ENCODE measurements at regions of chr2 and their contacts with region 1.

Region 1: DNA sequence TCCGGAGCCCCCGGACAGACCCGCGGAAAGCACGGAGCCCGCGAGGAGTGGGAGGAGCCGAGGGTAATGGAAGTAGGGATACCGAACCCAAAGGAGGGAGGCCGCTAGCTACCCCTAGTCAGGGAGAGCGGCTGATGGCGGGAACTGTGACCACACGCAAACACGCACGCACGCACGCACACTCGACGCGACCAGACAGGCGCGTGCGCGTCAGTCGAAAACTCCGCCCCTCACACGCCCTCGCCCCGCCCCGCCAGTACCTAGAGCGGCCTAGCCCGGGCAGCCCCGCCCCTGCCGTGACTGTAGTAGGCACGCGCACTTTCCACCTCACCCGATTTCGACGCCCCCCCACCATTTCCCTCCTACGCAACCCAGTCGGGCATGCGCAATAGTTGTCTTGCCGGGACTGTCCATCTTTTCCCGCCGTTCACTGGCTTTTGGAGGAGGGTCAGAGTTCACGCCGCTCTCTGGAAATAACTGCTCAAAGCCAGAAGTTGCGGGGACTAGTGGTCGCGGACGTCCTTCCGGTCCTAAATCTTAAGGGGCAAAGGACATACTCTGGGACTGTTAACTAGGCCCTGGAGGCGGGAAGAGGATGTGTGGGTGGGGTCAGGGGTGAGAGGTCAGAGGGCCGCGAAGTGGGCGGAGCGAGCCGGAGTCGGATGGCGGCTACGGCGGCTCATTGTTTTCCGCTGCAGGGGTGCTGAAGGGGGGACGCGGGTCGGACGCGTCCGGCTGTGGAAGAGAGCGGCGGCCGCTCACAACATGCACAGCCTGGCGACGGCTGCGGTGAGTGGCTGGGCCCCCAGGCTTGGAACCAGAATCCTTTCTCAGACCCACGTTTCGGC is at the starts of genes CNOT9 and USP37:
- DNase-seq: peak; percentile 100
- H3K4me3 Mint-ChIP-seq: peak within 1 kb of the TSS; percentile 96
- H3K27ac Mint-ChIP-seq: peak within 1 kb of the TSS; percentile 100
- H3K4me1 Mint-ChIP-seq: peaks cover 54% of the 10 kb centered on the region
- H3K27me3 Mint-ChIP-seq: no peaks in the 10 kb centered on the region
- total RNA-seq, gene CNOT9: 84.7 to 87.3 TPM
- total RNA-seq, gene USP37: 27.2 to 28.7 TPM

Region 2: DNA sequence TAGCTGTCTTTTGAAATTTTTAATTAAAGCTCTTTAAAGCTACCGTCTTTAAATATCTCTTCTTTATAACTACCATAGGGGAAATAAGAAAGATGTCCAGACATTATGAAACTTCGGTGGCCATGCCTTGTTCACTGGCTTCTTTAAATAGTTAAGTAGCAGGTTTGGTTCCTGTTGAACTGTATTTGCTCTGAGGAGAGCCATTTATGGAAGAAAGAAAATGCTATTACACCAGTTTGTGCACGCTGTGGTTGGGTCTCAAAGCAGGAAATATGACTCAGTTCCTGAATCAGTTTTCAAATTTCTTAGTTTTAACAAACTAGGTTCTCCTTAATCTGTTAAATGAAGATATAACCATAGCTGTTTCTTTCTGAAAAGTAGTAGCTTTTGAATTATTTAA is 339.2 kb before region 1 on chr2:
- CTCF ChIA-PET with region 1: no interaction called
- POLR2A ChIA-PET with region 1: interaction called, 4 read pairs
- intact Hi-C with region 1: loop called (anchors 1 kb)
- DNase-seq: peak; percentile 63
- H3K4me3 Mint-ChIP-seq: peak overlapping the region; percentile 4
- H3K27ac Mint-ChIP-seq: peak overlapping the region; percentile 91
- H3K4me1 Mint-ChIP-seq: peaks cover 74% of the 10 kb centered on the region
- H3K27me3 Mint-ChIP-seq: no peaks in the 10 kb centered on the region

Region 3: DNA sequence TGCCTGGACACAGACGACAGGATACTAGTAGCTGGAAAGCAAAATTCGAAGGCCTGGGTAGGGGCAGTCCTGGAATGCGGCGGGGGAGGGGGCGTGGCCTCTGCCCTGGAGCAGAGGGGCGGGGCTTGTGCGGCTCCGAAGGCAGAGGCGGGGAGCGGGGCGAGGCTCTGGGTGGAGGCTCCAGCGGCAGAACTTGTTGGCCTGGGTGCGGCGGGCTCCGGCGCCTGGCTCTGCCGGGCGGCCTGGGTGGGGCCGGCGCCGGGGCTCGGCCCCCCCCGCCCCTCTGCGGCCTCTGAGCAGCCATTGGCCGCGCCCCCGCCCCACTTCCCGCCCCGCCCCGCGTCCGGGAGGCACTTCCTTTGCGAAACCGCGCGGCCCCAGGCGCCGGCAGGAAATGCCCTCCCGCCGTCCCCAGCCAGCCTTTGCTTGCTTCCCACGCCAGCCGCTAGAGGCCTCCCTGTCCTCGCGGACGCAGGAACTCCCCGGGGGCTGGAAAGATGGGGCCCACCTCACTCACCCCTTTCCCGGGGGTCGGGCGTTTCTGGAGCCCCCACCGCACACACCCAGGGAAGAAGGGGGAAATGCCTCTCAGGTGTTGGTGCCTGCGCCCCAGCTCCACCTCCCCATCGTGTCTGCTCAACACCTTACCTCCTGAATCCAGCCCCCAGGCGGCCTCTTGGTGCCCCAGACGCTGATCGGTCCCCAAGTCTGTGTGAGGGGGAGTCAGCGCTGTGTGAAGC is 162.0 kb before region 1 on chr2:
- CTCF ChIA-PET with region 1: no interaction called
- POLR2A ChIA-PET with region 1: interaction called, 5 read pairs
- intact Hi-C with region 1: loop called (anchors 1 kb)
- DNase-seq: peak; percentile 97
- H3K4me3 Mint-ChIP-seq: peak overlapping the region; percentile 71
- H3K27ac Mint-ChIP-seq: peak overlapping the region; percentile 81
- H3K4me1 Mint-ChIP-seq: peaks cover 42% of the 10 kb centered on the region
- H3K27me3 Mint-ChIP-seq: peaks cover 5% of the 10 kb centered on the region

Region 4: DNA sequence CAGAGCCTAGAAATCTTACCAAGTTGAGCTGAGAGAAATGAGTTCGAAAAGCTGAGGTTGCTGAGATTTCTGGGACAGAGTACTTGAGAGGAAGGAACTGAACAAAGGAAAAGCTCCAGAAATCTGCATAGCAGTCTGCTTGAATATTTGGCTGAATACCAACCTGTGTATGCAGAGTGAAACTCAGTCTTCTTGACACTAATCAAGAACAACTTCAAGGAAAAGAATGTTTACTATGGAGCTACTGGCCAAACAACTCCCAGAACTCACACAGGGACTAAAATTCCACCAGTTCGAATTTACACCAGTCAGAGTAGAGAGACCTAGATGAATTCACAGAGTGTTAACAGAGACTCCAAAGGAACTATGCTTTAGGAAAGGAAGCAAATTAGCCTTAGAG is 66.7 kb before region 1 on chr2:
- CTCF ChIA-PET with region 1: no interaction called
- POLR2A ChIA-PET with region 1: no interaction called
- intact Hi-C with region 1: no loop called
- DNase-seq: no peak
- H3K4me3 Mint-ChIP-seq: no peak overlapping the region
- H3K27ac Mint-ChIP-seq: no peak overlapping the region
- H3K4me1 Mint-ChIP-seq: no peaks in the 10 kb centered on the region
- H3K27me3 Mint-ChIP-seq: no peaks in the 10 kb centered on the region

Region 5: GRCh38 chr2:218582076-218582475 is 13.7 kb after region 1 on chr2:
- CTCF ChIA-PET with region 1: interaction called, 3 read pairs
- POLR2A ChIA-PET with region 1: interaction called, 3 read pairs
- intact Hi-C with region 1: loop called (anchors 1 kb)
- DNase-seq: no peak
- H3K4me3 Mint-ChIP-seq: no peak overlapping the region
- H3K27ac Mint-ChIP-seq: peak overlapping the region; percentile 65
- H3K4me1 Mint-ChIP-seq: peaks cover 42% of the 10 kb centered on the region
- H3K27me3 Mint-ChIP-seq: no peaks in the 10 kb centered on the region

Region 6: GRCh38 chr2:218710687-218711549 is 142.5 kb after region 1 on chr2 and contains the start of gene TTLL4:
- CTCF ChIA-PET with region 1: no interaction called
- POLR2A ChIA-PET with region 1: no interaction called
- intact Hi-C with region 1: loop called (anchors 1 kb)
- DNase-seq: peak; percentile 99
- H3K4me3 Mint-ChIP-seq: peak within 1 kb of the TSS; percentile 88
- H3K27ac Mint-ChIP-seq: peak within 1 kb of the TSS; percentile 72
- H3K4me1 Mint-ChIP-seq: peaks cover 20% of the 10 kb centered on the region
- H3K27me3 Mint-ChIP-seq: no peaks in the 10 kb centered on the region
- total RNA-seq, gene TTLL4: 30.1 to 32.1 TPM